CD8-positive, alpha-beta T cell (primary cell): ENCODE measurements at regions of chr13 and their contacts with region 1.

Region 1: DNA sequence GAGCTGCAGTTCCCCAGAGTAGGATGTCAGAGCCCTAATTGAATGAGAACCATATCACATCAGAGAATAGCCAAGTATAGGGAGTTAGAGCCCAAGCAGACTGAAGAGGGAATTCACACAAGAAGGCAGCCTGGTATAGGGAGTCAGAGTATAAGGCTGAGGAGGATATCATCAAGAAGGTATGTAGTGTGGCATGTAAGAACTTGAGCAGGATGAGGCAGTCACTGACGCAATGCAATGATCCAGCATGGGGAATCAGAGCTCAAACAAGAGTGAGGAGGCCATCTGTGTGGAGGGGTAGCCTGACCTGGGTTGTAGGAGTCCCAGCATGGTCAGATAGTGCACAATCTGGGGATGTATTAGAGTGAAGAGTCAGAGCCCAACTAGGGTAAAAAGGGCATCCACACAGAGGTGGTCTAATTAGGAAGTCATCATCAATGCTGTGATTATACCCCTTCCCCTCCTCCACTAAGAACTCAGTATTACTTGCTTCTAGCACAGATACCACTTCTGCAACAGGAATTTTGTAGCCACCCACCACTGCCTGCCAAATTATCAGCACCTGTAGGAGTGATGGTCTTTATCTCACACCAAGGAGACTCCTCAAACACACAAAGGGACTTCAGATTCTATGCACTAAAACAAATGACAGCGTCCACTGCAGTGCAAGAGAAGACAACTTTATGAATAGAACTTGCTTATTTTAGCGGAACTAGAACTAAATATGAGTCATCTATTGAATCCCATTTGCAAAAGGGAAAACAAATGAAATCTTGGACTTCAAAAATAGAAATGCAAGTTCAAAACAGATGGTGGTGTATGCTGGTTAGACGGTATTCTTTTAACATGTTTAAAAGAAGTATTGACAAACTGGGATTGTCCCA is 107.2 kb downstream of the FNDC3A start:
- DNase-seq: no peak
- ATAC-seq: no peak
- H3K4me3 ChIP-seq: no peak overlapping the region
- H3K4me3 Mint-ChIP-seq: no peak overlapping the region
- H3K27ac ChIP-seq: no peak overlapping the region
- H3K27ac Mint-ChIP-seq: no peak overlapping the region
- H3K4me1 ChIP-seq: no peaks in the 10 kb centered on the region
- H3K4me1 Mint-ChIP-seq: no peaks in the 10 kb centered on the region
- H3K27me3 ChIP-seq: no peaks in the 10 kb centered on the region
- H3K27me3 Mint-ChIP-seq: no peaks in the 10 kb centered on the region
- CTCF ChIP-seq: no peak

Region 2: GRCh38 chr13:49098771-49099512 is 16.0 kb after region 1 on chr13:
- CTCF ChIA-PET with region 1: no interaction called
- POLR2A ChIA-PET with region 1: no interaction called
- intact Hi-C with region 1: loop called in 1 of 2 experiments (anchors 2 kb)
- DNase-seq: peak in 2 of 9 experiments; percentile 11 to 43
- ATAC-seq: no peak
- H3K4me3 ChIP-seq: no peak overlapping the region
- H3K4me3 Mint-ChIP-seq: no peak overlapping the region
- H3K27ac ChIP-seq: no peak overlapping the region
- H3K27ac Mint-ChIP-seq: no peak overlapping the region
- H3K4me1 ChIP-seq: no peaks in the 10 kb centered on the region
- H3K4me1 Mint-ChIP-seq: peaks cover 8% of the 10 kb centered on the region
- H3K27me3 ChIP-seq: no peaks in the 10 kb centered on the region
- H3K27me3 Mint-ChIP-seq: no peaks in the 10 kb centered on the region
- CTCF ChIP-seq: no peak

Region 3: GRCh38 chr13:49348751-49349150 is 265.9 kb after region 1 on chr13:
- CTCF ChIA-PET with region 1: no interaction called
- POLR2A ChIA-PET with region 1: no interaction called
- intact Hi-C with region 1: no loop called
- DNase-seq: no peak
- ATAC-seq: no peak
- H3K4me3 ChIP-seq: no peak overlapping the region
- H3K4me3 Mint-ChIP-seq: no peak overlapping the region
- H3K27ac ChIP-seq: no peak overlapping the region
- H3K27ac Mint-ChIP-seq: no peak overlapping the region
- H3K4me1 ChIP-seq: no peaks in the 10 kb centered on the region
- H3K4me1 Mint-ChIP-seq: peaks cover 3% of the 10 kb centered on the region
- H3K27me3 ChIP-seq: no peaks in the 10 kb centered on the region
- H3K27me3 Mint-ChIP-seq: no peaks in the 10 kb centered on the region
- CTCF ChIP-seq: no peak